B cell (primary cell): ENCODE measurements at regions of chr15 and their contacts with region 1.

Region 1: GRCh38 chr15:45457641-45458433 is 64.7 kb downstream of the SLC30A4 start:
- DNase-seq: peak; percentile 92
- ATAC-seq: peak; percentile 73
- H3K4me3 ChIP-seq: peak overlapping the region; percentile 29 to 74 (median 49)
- H3K4me3 Mint-ChIP-seq: peak overlapping the region; percentile 84
- H3K27ac ChIP-seq: peak overlapping the region; percentile 52 to 62
- H3K27ac Mint-ChIP-seq: peak overlapping the region; percentile 72
- H3K4me1 ChIP-seq: peaks cover 34 to 37% of the 10 kb centered on the region in 2 donors
- H3K4me1 Mint-ChIP-seq: peaks cover 42% of the 10 kb centered on the region
- H3K27me3 ChIP-seq: no peaks in the 10 kb centered on the region
- H3K27me3 Mint-ChIP-seq: no peaks in the 10 kb centered on the region
- CTCF ChIP-seq: peak; percentile 94

Region 2: GRCh38 chr15:45118131-45118588 is 339.7 kb before region 1 on chr15:
- CTCF ChIA-PET with region 1: interaction called, 5 read pairs
- POLR2A ChIA-PET with region 1: no interaction called
- intact Hi-C with region 1: loop called (anchors 2 kb)
- DNase-seq: peak; percentile 92
- ATAC-seq: peak; percentile 98
- H3K4me3 ChIP-seq: peak overlapping the region in 3 of 5 experiments; percentile 36 to 60 (median 44)
- H3K4me3 Mint-ChIP-seq: peak overlapping the region; percentile 80
- H3K27ac ChIP-seq: no peak overlapping the region
- H3K27ac Mint-ChIP-seq: no peak overlapping the region
- H3K4me1 ChIP-seq: peaks cover 38 to 45% of the 10 kb centered on the region in 2 donors
- H3K4me1 Mint-ChIP-seq: peaks cover 36% of the 10 kb centered on the region
- H3K27me3 ChIP-seq: peaks cover 0 to 70% (median 47%) of the 10 kb centered on the region in 4 experiments
- H3K27me3 Mint-ChIP-seq: peaks cover 69% of the 10 kb centered on the region
- CTCF ChIP-seq: peak; percentile 100

Region 3: DNA sequence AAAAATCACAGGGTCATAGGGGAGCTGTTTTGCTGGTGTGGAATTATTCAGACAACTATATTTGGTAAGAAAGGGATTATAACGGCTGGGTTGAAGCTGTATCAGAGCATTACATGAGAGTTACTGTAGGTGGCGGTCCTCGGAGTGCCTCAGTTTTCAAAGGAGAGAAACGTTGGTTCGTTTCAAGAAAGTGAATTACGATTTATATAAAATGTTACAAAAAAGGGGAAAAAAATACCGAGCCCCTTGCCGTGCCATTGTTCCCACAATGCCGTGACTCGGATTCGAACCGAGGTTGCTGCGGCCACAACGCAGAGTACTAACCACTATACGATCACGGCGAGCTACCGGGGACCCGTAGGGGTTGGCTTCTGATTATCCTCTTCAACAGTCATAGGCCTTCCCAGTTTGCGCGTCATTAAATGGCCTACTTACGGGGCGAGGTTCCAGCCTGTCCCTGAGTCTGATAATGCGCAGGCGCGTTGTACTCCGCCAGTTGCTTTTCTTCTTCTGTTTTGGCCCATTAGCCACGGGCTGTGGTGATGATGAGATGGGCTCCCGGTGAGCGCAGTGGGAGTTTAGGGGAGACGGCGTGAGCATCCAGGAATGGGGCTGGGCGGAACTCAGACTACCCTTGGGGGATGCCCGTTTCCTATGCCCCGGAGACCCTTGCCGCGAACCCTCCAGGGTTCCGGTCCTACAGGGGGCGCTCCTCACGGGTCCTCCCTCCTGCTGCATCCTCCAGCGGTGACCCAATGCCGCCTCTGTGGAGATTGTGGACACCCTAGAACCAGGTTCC is 259.3 kb before region 1 on chr15:
- CTCF ChIA-PET with region 1: interaction called, 6 read pairs
- POLR2A ChIA-PET with region 1: no interaction called
- intact Hi-C with region 1: loop called (anchors 2 kb)
- DNase-seq: peak; percentile 100
- ATAC-seq: peak; percentile 62
- H3K4me3 ChIP-seq: peak overlapping the region; percentile 72 to 95 (median 85)
- H3K4me3 Mint-ChIP-seq: no peak overlapping the region
- H3K27ac ChIP-seq: peak overlapping the region; percentile 96 to 97
- H3K27ac Mint-ChIP-seq: no peak overlapping the region
- H3K4me1 ChIP-seq: peaks cover 11 to 18% of the 10 kb centered on the region in 2 donors
- H3K4me1 Mint-ChIP-seq: peaks cover 10% of the 10 kb centered on the region
- H3K27me3 ChIP-seq: no peaks in the 10 kb centered on the region
- H3K27me3 Mint-ChIP-seq: no peaks in the 10 kb centered on the region
- CTCF ChIP-seq: peak; percentile 68

Region 4: DNA sequence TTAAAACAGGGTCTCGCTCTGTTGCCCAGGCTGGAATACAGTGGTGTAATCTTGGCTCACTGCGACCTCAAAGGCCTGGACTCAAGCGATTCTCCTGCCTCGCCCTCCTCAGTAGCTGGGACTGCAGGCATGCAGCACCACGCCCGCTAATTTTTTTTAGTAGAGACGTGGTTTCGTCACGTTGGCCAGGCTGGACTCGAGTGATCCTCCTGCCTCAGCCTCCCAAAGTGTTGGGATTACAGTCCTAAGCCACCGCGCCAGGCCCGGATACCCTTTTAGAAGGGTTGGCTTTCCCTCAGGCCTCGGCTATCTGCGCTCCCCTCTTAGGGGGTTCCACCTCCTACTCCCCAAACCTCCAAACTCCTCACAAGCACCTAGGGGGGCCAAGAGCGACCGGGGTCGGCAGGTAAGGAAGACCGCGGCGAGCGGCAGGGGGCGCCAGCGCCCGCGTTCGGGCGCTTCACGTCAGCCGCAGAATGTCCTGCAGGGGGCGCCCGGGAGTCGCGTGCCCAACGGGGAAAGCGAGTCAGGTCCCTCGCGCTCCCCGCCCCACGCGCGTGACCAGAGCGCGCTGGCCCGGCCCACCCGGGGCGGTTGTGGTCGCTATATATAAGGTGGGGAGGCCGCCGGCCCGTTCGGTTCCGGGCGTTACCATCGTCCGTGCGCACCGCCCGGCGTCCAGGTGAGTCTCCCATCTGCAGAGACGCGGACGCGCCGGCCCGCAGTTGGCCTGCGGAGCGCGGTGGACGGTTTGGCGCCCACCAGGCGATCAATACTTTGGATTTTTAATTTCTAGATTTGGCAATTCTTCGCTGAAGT is 27.7 kb before region 1 on chr15:
- CTCF ChIA-PET with region 1: interaction called, 156 read pairs
- POLR2A ChIA-PET with region 1: no interaction called
- intact Hi-C with region 1: loop called (anchors 1 kb)
- DNase-seq: peak; percentile 89
- ATAC-seq: peak; percentile 90
- H3K4me3 ChIP-seq: peak overlapping the region in 4 of 5 experiments; percentile 27 to 55 (median 51)
- H3K4me3 Mint-ChIP-seq: peak overlapping the region; percentile 67
- H3K27ac ChIP-seq: no peak overlapping the region
- H3K27ac Mint-ChIP-seq: no peak overlapping the region
- H3K4me1 ChIP-seq: peaks cover 4 to 8% of the 10 kb centered on the region in 2 donors
- H3K4me1 Mint-ChIP-seq: peaks cover 2% of the 10 kb centered on the region
- H3K27me3 ChIP-seq: peaks cover 0 to 10% (median 1%) of the 10 kb centered on the region in 4 experiments
- H3K27me3 Mint-ChIP-seq: peaks cover 6% of the 10 kb centered on the region
- CTCF ChIP-seq: peak; percentile 100

Region 5: DNA sequence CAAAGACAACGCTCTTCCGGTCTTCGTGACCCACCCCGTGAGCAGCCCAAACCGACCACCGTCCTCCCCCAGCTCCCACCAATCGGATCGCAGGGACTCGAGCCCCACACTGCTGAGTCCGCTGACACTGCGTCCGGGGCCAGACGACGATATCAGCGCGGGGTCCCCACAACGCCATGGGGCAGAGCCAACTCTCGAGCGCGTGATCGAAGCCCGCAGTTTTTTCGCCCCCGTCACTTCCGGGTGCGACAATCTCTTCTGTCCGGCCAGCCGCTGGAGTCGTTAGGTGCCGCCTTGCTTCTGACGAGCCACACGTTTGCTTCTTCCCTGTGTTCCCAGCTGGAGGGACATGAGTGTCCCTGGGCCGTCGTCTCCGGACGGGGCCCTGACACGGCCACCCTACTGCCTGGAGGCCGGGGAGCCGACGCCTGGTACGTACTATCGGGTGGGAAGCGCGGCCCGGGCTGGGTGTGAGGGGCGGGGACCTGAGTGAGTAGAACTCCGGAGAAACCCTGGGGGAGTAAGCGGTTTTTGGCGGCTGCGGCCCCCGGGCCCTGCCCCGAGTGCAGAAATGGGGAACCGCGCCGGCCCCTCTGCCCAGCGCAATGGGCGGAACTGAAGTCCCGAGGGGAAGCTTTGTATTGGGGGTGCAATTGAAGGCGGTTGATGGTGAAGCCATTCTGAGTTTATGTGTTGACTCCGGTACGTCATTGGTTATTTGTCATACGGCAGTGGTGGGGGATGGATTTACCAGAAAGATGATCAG is 129.4 kb after region 1 on chr15 and contains the start of gene BLOC1S6:
- CTCF ChIA-PET with region 1: interaction called, 26 read pairs
- POLR2A ChIA-PET with region 1: no interaction called
- intact Hi-C with region 1: no loop called
- DNase-seq: peak; percentile 99
- ATAC-seq: peak; percentile 86
- H3K4me3 ChIP-seq: peak within 1 kb of the TSS; percentile 64 to 98 (median 89)
- H3K4me3 Mint-ChIP-seq: peak within 1 kb of the TSS; percentile 100
- H3K27ac ChIP-seq: peak within 1 kb of the TSS; percentile 98 to 99
- H3K27ac Mint-ChIP-seq: peak within 1 kb of the TSS; percentile 100
- H3K4me1 ChIP-seq: peaks cover 22 to 29% of the 10 kb centered on the region in 2 donors
- H3K4me1 Mint-ChIP-seq: peaks cover 46% of the 10 kb centered on the region
- H3K27me3 ChIP-seq: no peaks in the 10 kb centered on the region
- H3K27me3 Mint-ChIP-seq: no peaks in the 10 kb centered on the region
- CTCF ChIP-seq: no peak
- total RNA-seq, gene BLOC1S6: 51.3 and 60.8 TPM in 2 replicates

Region 6: GRCh38 chr15:45634442-45635190 is 176.8 kb after region 1 on chr15 and contains the start of gene SQOR:
- CTCF ChIA-PET with region 1: interaction called, 12 read pairs
- POLR2A ChIA-PET with region 1: no interaction called
- intact Hi-C with region 1: no loop called
- DNase-seq: peak; percentile 79
- ATAC-seq: peak; percentile 74
- H3K4me3 ChIP-seq: peak within 1 kb of the TSS; percentile 81 to 91 (median 86)
- H3K4me3 Mint-ChIP-seq: peak within 1 kb of the TSS; percentile 99
- H3K27ac ChIP-seq: peak within 1 kb of the TSS; percentile 69 to 78
- H3K27ac Mint-ChIP-seq: peak within 1 kb of the TSS; percentile 97
- H3K4me1 ChIP-seq: peaks cover 30 to 36% of the 10 kb centered on the region in 2 donors
- H3K4me1 Mint-ChIP-seq: peaks cover 39% of the 10 kb centered on the region
- H3K27me3 ChIP-seq: no peaks in the 10 kb centered on the region
- H3K27me3 Mint-ChIP-seq: no peaks in the 10 kb centered on the region
- CTCF ChIP-seq: no peak
- total RNA-seq, gene SQOR: 24.3 and 25.6 TPM in 2 replicates